Heart right ventricle (tissue), 16 donors: ENCODE measurements at regions of chr2 and their contacts with region 1.

Region 1: DNA sequence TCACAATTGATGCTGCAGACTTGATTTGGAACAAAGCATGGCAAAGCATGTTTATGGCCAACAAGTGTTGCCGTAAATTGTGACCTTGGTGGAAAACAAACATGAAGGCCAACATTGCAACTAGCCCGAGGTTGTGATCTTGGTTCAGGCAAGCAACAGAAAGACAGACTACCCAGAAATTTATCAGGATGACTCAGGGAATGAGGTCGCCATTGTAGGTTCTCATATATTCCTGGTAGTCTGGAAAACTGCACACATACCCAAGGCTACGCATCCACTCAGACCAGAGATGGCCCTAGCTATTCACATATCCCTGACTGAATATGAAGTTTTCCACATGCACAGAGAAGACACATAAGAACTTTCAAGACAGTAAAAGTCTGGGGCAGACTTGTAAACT is 30.1 kb downstream of the CYP1B1 start:
- DNase-seq: no peak
- ATAC-seq: no peak
- H3K4me3 ChIP-seq: no peak overlapping the region
- H3K27ac ChIP-seq: no peak overlapping the region
- H3K4me1 ChIP-seq: no peaks in the 10 kb centered on the region
- H3K27me3 ChIP-seq: peaks cover 0 to 7% (median 0%) of the 10 kb centered on the region in 7 donors
- CTCF ChIP-seq: no peak

Region 2: GRCh38 chr2:37993143-37993542 is 52.7 kb before region 1 on chr2:
- intact Hi-C with region 1: loop called in 1 of 10 experiments (anchors 10 kb)
- DNase-seq: no peak
- ATAC-seq: no peak
- H3K4me3 ChIP-seq: no peak overlapping the region
- H3K27ac ChIP-seq: no peak overlapping the region
- H3K4me1 ChIP-seq: peaks cover 0 to 4% (median 0%) of the 10 kb centered on the region in 9 donors
- H3K27me3 ChIP-seq: no peaks in the 10 kb centered on the region
- CTCF ChIP-seq: no peak